ENCODE measurements at regions of chr6 and their contacts with region 1.

Region 1: DNA sequence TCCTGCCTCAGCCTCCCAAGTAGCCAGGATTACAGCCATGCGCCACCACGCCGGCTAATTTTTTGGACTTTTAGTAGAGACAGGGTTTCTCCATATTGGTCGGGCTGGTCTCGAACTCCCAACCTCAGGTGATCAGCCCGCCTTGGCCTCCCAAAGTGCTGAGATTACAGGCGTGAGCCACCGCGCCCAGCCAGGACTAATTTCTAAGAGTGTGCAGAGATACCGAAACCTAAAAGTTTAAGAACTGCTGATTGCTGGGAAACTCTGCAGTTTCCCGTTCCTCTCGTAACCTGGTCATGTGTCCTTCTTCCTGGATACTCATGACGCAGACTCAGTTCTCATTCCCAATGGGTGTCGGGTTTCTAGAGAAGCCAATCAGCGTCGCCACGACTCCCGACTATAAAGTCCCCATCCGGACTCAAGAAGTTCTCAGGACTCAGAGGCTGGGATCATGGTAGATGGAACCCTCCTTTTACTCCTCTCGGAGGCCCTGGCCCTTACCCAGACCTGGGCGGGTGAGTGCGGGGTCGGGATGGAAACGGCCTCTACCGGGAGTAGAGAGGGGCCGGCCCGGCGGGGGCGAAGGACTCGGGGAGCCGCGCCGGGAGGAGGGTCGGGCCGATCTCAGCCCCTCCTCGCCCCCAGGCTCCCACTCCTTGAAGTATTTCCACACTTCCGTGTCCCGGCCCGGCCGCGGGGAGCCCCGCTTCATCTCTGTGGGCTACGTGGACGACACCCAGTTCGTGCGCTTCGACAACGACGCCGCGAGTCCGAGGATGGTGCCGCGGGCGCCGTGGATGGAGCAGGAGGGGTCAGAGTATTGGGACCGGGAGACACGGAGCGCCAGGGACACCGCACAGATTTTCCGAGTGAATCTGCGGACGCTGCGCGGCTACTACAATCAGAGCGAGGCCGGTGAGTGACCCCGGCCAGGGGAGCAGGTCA is at the start of gene HLA-E:
- DNase-seq: peak; percentile 70
- ATAC-seq: peak; percentile 83
- H3K4me3 Mint-ChIP-seq: peak within 1 kb of the TSS; percentile 98
- H3K27ac Mint-ChIP-seq: peak within 1 kb of the TSS; percentile 97
- H3K4me1 Mint-ChIP-seq: peaks cover 58% of the 10 kb centered on the region
- H3K27me3 Mint-ChIP-seq: no peaks in the 10 kb centered on the region
- CTCF ChIP-seq: no peak
- total RNA-seq, gene HLA-E: 737 and 740 TPM in 2 replicates

Region 2: DNA sequence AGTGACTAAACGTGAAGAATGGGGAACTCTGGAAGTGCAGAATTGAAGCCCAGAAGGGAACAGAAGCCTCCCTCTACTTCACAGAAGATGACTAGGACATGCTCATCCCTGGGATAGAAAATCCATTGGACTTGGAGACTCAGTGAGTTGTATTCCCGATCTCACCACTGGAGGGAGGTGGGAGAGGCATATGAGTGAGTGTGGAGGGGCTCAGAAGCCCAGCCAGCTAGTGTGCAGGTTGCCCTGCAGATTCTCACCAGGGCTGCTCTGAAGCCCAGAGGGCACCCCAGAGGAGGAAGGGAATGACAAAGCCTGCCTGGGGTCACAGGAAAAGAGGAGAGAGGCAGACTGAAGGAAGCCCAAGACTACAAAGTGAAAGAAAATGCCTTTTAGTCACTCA is 42.1 kb before region 1 on chr6:
- CTCF ChIA-PET with region 1: no interaction called
- POLR2A ChIA-PET with region 1: no interaction called
- intact Hi-C with region 1: no loop called
- DNase-seq: no peak
- ATAC-seq: no peak
- H3K4me3 Mint-ChIP-seq: no peak overlapping the region
- H3K27ac Mint-ChIP-seq: no peak overlapping the region
- H3K4me1 Mint-ChIP-seq: peaks cover 18% of the 10 kb centered on the region
- H3K27me3 Mint-ChIP-seq: peaks cover 73% of the 10 kb centered on the region
- CTCF ChIP-seq: no peak

Region 3: GRCh38 chr6:30508890-30509736 is 19.8 kb after region 1 on chr6:
- CTCF ChIA-PET with region 1: interaction called, 8 read pairs
- POLR2A ChIA-PET with region 1: interaction called, 460 read pairs
- intact Hi-C with region 1: loop called (anchors 1 kb)
- DNase-seq: no peak
- ATAC-seq: peak; percentile 55
- H3K4me3 Mint-ChIP-seq: peak overlapping the region; percentile 75
- H3K27ac Mint-ChIP-seq: peak overlapping the region; percentile 90
- H3K4me1 Mint-ChIP-seq: peaks cover 73% of the 10 kb centered on the region
- H3K27me3 Mint-ChIP-seq: no peaks in the 10 kb centered on the region
- CTCF ChIP-seq: no peak

Region 4: DNA sequence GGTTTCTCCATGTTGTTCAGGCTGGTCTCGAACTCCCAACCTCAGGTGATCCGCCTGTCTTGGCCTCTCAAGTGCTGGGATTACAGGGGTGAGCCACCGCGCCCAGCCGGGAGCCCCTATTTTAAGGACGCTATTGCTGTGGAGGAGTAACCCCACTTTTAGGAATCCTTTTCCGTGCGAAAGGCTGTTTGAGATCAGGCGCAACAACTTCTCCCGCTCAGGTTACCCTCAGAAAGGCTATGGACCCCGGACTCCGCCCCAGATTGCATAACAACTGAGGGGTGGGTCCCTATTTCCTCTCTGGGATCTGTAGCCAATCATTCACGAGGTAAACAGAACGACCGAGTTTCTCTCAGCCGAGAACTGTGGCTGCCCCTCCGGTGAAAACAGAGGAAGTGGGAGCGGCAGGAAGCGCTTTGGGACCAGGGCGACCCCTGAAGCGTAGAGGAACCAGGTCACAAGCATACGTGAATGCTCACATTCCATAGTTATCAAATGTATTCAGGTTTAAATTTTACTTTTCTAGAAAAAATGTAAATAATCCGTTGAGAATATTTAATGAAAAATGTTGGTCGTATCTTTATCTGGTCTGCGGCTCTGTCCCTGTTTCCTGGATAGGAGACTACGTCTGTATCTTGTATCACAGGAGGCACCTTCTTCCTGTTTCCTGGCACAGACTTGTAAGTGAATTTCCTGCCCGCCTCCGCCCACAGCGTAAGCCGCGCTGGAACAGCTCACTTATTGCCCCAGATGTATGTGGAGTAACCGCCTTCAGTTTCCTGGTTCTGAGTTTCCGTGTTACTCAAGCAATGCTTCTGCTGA is 26.8 kb after region 1 on chr6:
- CTCF ChIA-PET with region 1: interaction called, 6 read pairs
- POLR2A ChIA-PET with region 1: interaction called, 460 read pairs
- intact Hi-C with region 1: loop called (anchors 1 kb)
- DNase-seq: peak; percentile 69
- ATAC-seq: peak; percentile 82
- H3K4me3 Mint-ChIP-seq: peak overlapping the region; percentile 87
- H3K27ac Mint-ChIP-seq: peak overlapping the region; percentile 97
- H3K4me1 Mint-ChIP-seq: peaks cover 71% of the 10 kb centered on the region
- H3K27me3 Mint-ChIP-seq: no peaks in the 10 kb centered on the region
- CTCF ChIP-seq: no peak

Region 5: DNA sequence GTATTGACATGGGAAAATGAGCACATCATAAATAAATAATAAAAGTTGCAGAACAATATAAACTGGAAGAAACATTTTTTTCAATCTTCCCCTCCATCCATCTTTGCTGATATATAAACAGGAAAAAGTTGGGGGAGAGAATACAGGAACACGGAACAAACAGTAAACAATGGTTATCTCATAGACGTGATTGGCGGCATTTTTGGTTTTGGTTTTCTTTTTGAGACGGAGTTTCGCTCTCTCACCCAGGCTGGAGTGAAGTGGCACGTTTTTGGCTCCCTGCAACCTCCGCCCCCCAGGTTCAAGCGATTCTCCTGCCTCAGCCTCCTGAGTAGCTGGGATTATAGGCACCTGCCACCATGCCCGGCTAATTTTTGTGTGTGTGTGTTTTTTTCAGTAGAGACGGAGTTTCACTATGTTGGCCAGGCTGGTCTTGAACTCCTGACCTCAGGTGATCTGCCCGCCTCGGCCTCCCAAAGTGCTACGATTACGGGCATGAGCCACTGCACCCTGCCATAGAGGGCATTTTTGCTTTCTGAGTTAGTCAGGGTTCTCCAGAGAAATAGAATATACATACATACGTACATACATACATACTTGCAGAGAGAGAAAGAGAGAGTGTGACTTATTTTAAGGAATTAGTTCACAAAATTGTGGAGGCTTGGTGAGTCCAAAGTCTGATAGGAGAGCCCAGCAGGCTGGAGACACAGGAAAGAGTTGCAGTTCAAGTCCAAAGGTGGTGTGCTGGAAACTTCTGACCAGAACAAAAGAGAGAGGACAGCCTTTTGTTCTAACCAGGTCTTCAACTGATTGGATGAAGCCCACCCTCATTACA is 44.3 kb after region 1 on chr6:
- CTCF ChIA-PET with region 1: interaction called, 411 read pairs
- POLR2A ChIA-PET with region 1: interaction called, 458 read pairs
- intact Hi-C with region 1: loop called (anchors 1 kb)
- DNase-seq: no peak
- ATAC-seq: no peak
- H3K4me3 Mint-ChIP-seq: no peak overlapping the region
- H3K27ac Mint-ChIP-seq: peak overlapping the region; percentile 85
- H3K4me1 Mint-ChIP-seq: peaks cover 45% of the 10 kb centered on the region
- H3K27me3 Mint-ChIP-seq: no peaks in the 10 kb centered on the region
- CTCF ChIP-seq: no peak

Region 6: GRCh38 chr6:30556066-30556905 is 66.9 kb after region 1 on chr6 and contains the start of gene GNL1:
- CTCF ChIA-PET with region 1: no interaction called
- POLR2A ChIA-PET with region 1: interaction called, 20 read pairs
- intact Hi-C with region 1: loop called (anchors 1 kb)
- DNase-seq: peak; percentile 99
- ATAC-seq: peak; percentile 89
- H3K4me3 Mint-ChIP-seq: peak within 1 kb of the TSS; percentile 94
- H3K27ac Mint-ChIP-seq: peak within 1 kb of the TSS; percentile 97
- H3K4me1 Mint-ChIP-seq: peaks cover 40% of the 10 kb centered on the region
- H3K27me3 Mint-ChIP-seq: no peaks in the 10 kb centered on the region
- CTCF ChIP-seq: no peak
- total RNA-seq, gene GNL1: 67.2 and 67.4 TPM in 2 replicates

Region 7: GRCh38 chr6:30646458-30647241 is 157.3 kb after region 1 on chr6 and contains the start of gene C6orf136:
- CTCF ChIA-PET with region 1: no interaction called
- POLR2A ChIA-PET with region 1: no interaction called
- intact Hi-C with region 1: loop called (anchors 1 kb)
- DNase-seq: peak; percentile 82
- ATAC-seq: peak; percentile 78
- H3K4me3 Mint-ChIP-seq: peak within 1 kb of the TSS; percentile 91
- H3K27ac Mint-ChIP-seq: peak within 1 kb of the TSS; percentile 90
- H3K4me1 Mint-ChIP-seq: peaks cover 35% of the 10 kb centered on the region
- H3K27me3 Mint-ChIP-seq: no peaks in the 10 kb centered on the region
- CTCF ChIP-seq: no peak
- total RNA-seq, gene C6orf136: 21.6 and 35.6 TPM in 2 replicates

Measured in activated B cell treated with CpG ODN at 0.5 μM for 24 hours (primary cell).